Activated CD4-positive, alpha-beta memory T cell treated with anti-CD3 and anti-CD28 coated beads for 36 hours (primary cell): ENCODE measurements at regions of chr19 and their contacts with region 1.

Region 1: GRCh38 chr19:18044825-18045304 is 36.9 kb downstream of the ARRDC2 start:
- DNase-seq: peak; percentile 97
- H3K4me3 Mint-ChIP-seq: peak overlapping the region; percentile 50
- H3K27ac Mint-ChIP-seq: peak overlapping the region; percentile 75
- H3K4me1 Mint-ChIP-seq: peaks cover 37% of the 10 kb centered on the region
- H3K27me3 Mint-ChIP-seq: peaks cover 2% of the 10 kb centered on the region

Region 2: GRCh38 chr19:17766543-17767131 is 278.2 kb before region 1 on chr19:
- CTCF ChIA-PET with region 1: no interaction called
- POLR2A ChIA-PET with region 1: no interaction called
- intact Hi-C with region 1: no loop called
- DNase-seq: no peak
- H3K4me3 Mint-ChIP-seq: no peak overlapping the region
- H3K27ac Mint-ChIP-seq: no peak overlapping the region
- H3K4me1 Mint-ChIP-seq: peaks cover 2% of the 10 kb centered on the region
- H3K27me3 Mint-ChIP-seq: no peaks in the 10 kb centered on the region

Region 3: DNA sequence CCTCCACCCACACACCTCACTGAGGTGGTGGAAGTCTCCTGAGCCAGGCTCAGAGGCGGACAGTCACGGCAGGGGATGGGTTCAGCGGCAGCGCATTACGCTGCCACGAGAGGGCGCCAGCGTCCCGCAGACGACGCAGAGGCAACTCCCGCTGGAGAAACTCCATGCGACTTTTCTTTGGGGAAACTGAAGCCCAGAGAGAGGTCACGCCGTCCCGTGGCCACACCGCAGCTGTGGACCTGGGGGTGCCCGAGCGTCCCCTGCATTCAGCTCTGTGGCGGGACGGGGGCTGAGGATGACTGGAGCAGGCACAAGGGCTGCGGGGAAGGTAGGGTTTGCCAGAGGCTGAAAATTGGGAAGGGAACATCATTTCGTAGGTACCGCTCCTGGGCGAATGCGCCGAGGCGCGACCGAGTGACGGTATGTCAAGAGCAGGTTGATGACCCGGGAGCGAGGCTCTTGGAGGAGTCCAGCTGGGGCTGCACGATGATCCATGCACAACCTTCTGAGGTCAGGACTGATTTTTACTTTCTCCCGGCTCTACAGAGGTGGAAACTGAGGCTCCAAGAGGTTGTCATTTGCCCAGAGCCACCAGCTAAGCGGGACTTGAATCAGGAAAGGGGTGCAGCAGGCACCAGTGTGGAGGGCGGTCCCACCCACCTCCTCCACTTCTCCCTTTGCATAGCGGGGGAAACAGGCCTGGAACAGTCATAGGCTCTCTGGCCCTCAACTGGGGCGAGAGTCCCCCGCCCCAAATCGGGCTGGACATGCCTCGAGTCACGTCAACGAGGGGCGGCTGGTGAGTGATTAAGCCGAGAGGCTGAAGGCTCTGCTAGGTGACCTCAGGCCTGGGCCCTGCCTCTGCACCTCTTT is 37.6 kb before region 1 on chr19:
- CTCF ChIA-PET with region 1: interaction called, 10 read pairs
- POLR2A ChIA-PET with region 1: interaction called, 4 read pairs
- intact Hi-C with region 1: loop called (anchors 2 kb)
- DNase-seq: peak; percentile 88
- H3K4me3 Mint-ChIP-seq: peak overlapping the region; percentile 83
- H3K27ac Mint-ChIP-seq: peak overlapping the region; percentile 82
- H3K4me1 Mint-ChIP-seq: peaks cover 35% of the 10 kb centered on the region
- H3K27me3 Mint-ChIP-seq: no peaks in the 10 kb centered on the region

Region 4: DNA sequence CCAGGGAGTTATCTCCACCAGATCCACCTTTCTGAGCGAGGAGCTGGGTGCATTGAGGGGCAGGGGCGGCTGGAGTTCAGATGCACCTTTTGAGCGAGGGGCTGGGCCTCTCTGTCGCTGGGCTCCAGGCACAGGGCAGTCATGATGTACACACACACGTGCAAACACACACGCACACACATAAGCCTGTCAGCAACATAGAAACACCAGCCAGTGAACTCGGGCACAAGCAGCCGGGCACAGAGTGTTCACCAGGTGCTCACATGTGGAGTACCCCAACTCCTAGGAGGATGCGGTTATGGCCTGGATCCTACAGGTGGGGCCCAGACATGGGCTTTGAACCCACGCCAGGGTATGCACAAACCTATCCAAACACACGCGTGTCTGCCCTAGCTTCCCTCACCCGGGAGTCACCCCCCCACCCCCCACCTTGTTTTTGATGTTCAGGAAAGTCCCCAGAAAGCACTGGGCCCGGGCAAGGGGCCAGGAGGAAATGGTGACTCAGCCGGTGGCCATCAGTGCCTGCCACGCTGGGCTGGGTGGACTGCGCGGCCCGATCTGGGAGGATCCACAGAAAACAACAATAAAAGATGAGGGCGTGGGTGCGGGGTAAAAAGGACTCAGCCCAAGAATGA is 23.6 kb before region 1 on chr19:
- CTCF ChIA-PET with region 1: interaction called, 4 read pairs
- POLR2A ChIA-PET with region 1: interaction called, 7 read pairs
- intact Hi-C with region 1: loop called (anchors 1 kb)
- DNase-seq: peak; percentile 84
- H3K4me3 Mint-ChIP-seq: peak overlapping the region; percentile 76
- H3K27ac Mint-ChIP-seq: peak overlapping the region; percentile 95
- H3K4me1 Mint-ChIP-seq: peaks cover 58% of the 10 kb centered on the region
- H3K27me3 Mint-ChIP-seq: no peaks in the 10 kb centered on the region

Region 5: DNA sequence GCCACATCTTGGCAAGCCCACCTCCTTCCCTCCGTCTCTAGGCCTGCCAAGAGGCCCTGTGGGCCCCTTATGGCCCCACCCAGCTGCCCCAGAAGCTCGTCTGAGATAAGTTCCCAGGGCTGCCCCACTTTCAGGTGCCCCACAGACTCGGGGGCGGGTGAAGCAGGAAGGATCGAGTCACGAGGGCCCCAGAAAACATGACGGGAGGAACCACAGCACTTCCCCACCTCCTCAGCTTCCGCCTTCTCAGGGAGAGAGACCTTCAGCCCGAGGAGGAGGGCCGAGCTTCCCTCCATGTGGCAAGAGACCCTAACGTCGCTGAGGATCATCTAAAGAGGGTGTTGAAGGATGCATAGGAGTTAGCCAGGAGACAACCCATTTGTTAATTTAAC is 46.3 kb after region 1 on chr19:
- CTCF ChIA-PET with region 1: interaction called, 3 read pairs
- POLR2A ChIA-PET with region 1: interaction called, 5 read pairs
- intact Hi-C with region 1: loop called (anchors 2 kb)
- DNase-seq: peak; percentile 93
- H3K4me3 Mint-ChIP-seq: peak overlapping the region; percentile 60
- H3K27ac Mint-ChIP-seq: peak overlapping the region; percentile 92
- H3K4me1 Mint-ChIP-seq: peaks cover 51% of the 10 kb centered on the region
- H3K27me3 Mint-ChIP-seq: no peaks in the 10 kb centered on the region